ENCODE measurements at regions of chr14 and their contacts with region 1.

Region 1: DNA sequence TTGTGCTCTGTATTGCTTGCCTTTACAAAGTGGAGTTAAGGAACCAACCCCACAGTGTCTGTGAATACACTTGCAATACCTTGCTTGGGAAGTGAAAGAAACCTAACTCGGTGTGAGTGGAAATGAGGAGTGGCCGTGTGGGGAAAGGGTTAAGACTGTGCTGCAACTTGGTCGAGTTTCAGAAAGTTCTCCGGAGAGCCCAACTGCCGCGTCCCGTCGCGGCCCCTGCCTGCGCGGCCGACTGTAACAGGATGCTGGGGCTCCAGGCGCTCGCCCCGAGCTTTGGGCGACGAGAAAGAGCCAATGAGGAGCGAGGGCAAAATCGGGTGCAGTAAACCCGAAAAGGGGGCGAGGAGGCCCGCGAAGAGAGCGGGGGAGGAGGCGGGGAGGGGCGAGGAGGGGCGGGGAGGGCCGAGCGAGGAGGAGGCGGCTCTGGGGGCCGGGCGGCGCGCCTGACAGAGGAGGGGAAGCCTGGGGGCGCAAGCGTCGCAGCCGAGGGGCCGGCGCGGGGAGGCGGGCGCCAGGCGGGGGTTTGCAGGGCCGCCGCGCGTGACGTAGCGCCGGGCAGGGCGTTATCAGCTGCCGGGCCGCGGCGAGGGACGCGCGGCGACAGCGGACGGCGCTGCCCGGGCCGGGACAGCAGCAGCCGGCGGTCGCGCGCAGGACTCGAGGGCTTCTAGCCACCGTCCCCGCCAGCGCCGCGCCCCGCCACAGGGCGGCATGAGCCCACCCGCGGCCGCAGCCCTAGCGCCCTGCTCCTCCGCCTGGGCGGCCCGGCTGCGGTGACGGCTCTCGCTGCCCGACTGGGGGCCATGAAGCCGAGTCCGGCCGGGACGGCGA is at the start of gene DACT1:
- DNase-seq: peak; percentile 89
- H3K4me3 Mint-ChIP-seq: peak within 1 kb of the TSS; percentile 87
- H3K27ac Mint-ChIP-seq: peak within 1 kb of the TSS; percentile 88
- H3K4me1 Mint-ChIP-seq: peaks cover 43% of the 10 kb centered on the region
- H3K27me3 Mint-ChIP-seq: peaks cover 34% of the 10 kb centered on the region
- total RNA-seq, gene DACT1: 3.3 and 3.8 TPM in 2 replicates

Region 2: DNA sequence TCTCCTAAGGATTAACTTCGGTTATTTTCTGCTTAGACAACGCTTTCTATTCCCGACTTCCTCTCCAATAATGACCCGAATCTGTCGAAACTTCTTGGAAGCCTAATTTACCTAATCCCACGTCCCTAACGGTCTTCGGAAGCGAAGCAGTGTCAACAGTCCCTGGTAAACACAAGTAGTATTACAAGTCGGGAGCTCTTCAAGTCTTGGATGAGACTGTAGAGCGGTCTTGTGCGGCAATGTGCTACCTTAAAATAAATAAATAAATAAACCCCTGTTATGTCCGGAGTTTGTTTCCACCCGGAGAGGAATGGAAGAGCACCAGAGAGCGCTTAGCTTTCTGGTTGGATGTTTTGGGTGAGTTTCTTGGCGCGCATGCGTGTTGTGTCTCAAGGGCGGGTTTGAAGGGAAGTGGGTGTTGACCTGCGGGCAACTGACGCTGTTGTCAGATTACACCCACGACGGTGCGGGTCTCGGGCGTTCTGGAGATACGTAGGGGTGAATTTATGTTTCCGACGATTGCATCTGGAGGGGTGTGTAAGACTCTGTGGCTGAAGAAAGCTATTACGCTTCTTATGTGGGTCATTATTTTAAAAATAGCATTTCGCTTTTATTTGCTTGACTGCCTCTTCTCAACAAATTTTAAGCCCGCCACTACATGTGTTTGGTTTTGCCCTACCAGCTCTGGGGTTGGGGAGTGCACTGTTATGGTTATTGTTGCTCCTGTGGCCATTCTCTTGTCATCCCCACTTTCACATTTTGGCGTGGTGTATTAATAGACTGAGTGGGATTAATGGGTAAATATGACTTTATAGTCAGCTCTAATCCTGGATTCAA is 210.1 kb before region 1 on chr14 and contains the starts of genes KIAA0586 and TIMM9:
- intact Hi-C with region 1: loop called (anchors 5 kb)
- DNase-seq: peak; percentile 98
- H3K4me3 Mint-ChIP-seq: peak within 1 kb of the TSS; percentile 79
- H3K27ac Mint-ChIP-seq: peak within 1 kb of the TSS; percentile 94
- H3K4me1 Mint-ChIP-seq: peaks cover 31% of the 10 kb centered on the region
- H3K27me3 Mint-ChIP-seq: peaks cover 2% of the 10 kb centered on the region
- total RNA-seq, gene KIAA0586: 19.8 and 20.9 TPM in 2 replicates
- total RNA-seq, gene TIMM9: 67.7 and 71.8 TPM in 2 replicates

Region 3: DNA sequence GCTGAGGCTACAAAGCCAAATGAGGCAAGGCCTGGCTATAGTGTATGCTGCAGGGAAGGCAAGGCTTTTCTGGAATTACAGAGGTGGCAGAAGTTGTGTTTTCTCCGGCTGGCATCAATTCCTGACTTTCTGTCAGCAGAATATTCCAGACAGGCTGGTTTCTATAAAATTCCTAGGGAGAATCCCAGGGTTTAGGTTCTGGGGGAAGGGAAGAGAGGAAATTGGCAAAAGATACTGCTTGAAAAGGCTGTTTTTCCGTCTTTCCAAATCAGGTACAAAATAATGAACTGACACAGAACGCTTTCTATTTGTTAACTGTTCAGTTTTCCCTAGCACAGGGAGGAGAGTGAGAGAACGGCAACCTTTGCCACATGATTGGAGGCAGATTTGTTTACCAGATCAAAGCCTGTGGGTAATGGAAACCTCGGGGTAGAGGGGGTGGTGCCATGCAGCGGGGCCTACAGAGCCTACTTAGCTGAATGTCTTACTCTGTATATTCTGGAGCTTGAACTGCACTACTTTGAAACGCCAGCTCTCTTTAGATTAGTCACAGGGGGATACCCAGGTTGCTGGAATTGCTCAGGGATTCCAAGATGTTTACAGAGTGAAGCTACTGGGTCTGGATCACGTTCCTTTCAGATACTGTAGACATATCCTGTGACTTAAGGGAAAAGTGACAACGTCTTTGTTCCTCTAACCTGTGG is 65.7 kb before region 1 on chr14:
- intact Hi-C with region 1: loop called (anchors 1 kb)
- DNase-seq: peak; percentile 78
- H3K4me3 Mint-ChIP-seq: peak overlapping the region; percentile 68
- H3K27ac Mint-ChIP-seq: peak overlapping the region; percentile 84
- H3K4me1 Mint-ChIP-seq: peaks cover 28% of the 10 kb centered on the region
- H3K27me3 Mint-ChIP-seq: no peaks in the 10 kb centered on the region

Region 4: GRCh38 chr14:58812050-58812910 is 174.7 kb after region 1 on chr14:
- intact Hi-C with region 1: loop called (anchors 10 kb)
- DNase-seq: no peak
- H3K4me3 Mint-ChIP-seq: no peak overlapping the region
- H3K27ac Mint-ChIP-seq: no peak overlapping the region
- H3K4me1 Mint-ChIP-seq: peaks cover 4% of the 10 kb centered on the region
- H3K27me3 Mint-ChIP-seq: peaks cover 4% of the 10 kb centered on the region

Region 5: DNA sequence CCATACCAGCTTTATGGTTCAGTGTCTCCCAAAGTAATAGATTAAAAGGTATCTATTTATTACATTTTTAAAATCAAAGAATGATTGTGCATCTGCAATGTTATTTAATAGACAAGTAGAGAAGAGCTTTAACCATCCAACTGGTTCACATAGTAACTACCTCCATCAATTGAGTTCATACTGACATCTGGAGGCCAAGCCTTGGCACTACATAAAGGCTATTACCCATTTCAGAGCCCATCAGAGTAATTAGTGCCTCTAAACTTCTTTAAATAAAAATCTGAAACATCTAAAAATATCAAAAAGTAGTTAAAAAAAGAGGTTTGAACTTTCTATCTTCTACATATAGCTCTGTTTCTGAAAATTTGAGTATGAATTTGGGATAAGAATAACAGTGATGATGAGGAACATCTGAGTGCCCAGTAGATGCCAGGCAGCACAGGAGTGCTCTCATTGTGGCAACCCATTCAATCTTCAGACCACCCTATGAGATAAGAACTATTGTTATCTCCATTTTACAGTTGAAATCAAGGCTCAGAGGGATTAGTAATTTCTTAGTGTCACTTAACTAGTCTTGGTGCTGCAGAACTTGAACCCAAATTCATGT is 417.9 kb after region 1 on chr14:
- intact Hi-C with region 1: loop called (anchors 1 kb)
- DNase-seq: peak; percentile 77
- H3K4me3 Mint-ChIP-seq: no peak overlapping the region
- H3K27ac Mint-ChIP-seq: no peak overlapping the region
- H3K4me1 Mint-ChIP-seq: no peaks in the 10 kb centered on the region
- H3K27me3 Mint-ChIP-seq: peaks cover 2% of the 10 kb centered on the region

Region 6: DNA sequence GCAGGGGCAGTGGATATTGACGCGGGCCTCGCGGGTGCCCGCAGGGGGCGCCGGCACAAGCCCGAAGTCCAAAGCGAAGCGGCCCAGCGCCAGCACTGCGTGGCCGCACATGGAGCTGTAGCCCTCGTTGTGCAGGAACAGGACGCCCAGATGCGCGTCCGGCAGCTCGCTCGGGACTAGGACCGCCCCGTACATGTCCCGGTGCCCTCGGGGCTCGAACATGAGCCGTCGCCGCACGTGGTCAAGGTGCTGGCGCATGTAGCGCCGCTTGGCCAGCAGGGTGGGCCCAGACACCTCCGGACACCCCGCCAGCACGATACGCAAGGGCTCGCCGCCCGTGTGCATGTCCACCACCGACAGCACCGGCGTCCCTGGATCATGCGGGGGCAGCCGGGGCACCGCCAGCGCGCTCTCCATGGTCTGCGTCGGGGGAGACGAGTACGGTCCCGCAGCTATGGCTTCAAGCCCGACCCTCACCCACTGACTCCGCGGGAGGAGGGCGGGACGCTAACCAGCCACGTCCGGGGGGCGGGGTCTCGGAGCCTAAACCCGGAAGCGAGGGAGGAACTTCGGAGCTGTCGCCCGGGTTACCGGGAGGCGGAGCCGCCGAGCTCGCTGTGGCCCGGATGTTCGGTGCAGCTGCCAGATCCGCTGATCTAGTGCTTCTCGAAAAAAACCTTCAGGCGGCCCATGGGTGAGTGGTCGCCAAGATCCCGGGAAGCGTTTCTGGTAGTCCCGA is 846.5 kb after region 1 on chr14 and contains the starts of genes JKAMP and L3HYPDH:
- intact Hi-C with region 1: loop called (anchors 5 kb)
- DNase-seq: peak; percentile 99
- H3K4me3 Mint-ChIP-seq: peak within 1 kb of the TSS; percentile 96
- H3K27ac Mint-ChIP-seq: peak within 1 kb of the TSS; percentile 93
- H3K4me1 Mint-ChIP-seq: peaks cover 53% of the 10 kb centered on the region
- H3K27me3 Mint-ChIP-seq: no peaks in the 10 kb centered on the region
- total RNA-seq, gene JKAMP: 27.9 and 28.6 TPM in 2 replicates
- total RNA-seq, gene L3HYPDH: 20.8 TPM in 2 replicates

Measured in activated CD4-positive, alpha-beta T cell treated with anti-CD3 and anti-CD28 coated beads, Interleukin-2, amount 10 ng/mL, durations not matched to agents 24 days and 14 days (primary cell).